Spleen (tissue), 13 donors: ENCODE measurements at regions of chr2 and their contacts with region 1.

Region 1: DNA sequence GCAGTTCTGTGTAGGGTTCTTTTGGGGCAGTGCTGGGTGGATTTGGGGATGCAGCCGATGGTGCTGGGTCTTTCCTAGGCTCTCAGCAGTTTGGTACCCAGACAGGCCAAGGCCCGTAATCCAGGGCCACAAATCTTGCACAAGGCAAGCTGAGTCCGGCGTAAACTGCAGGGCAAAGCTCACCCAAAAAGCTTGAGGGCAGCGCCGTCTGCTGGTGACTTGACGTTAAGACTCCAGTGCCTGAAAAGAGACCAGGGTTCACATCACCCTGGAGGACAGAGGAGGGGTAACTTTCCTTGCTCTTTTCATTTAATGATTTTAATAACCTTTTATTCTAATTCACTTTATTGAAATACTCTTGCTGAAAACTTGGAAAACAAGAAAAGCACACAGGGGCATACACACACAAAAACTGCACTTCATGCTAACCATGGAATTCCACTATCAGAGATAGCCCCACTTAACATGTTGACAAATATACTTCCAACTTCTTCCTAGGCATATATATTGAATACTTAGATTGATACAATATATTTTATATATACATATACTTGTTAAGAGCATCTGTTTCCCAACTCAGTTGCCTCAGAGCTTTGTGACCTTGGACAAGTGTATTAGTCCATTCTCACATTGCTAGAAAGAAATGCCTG is 38.9 kb downstream of the CNGA3 start:
- DNase-seq: peak; percentile 91
- H3K4me3 ChIP-seq: no peak overlapping the region
- H3K27ac ChIP-seq: no peak overlapping the region
- H3K4me1 ChIP-seq: peaks cover 0 to 7% (median 0%) of the 10 kb centered on the region in 6 donors
- H3K27me3 ChIP-seq: peaks cover 0 to 5% (median 0%) of the 10 kb centered on the region in 7 donors
- CTCF ChIP-seq: peak; percentile 78 to 94 (median 90)
- POLR2A ChIP-seq: no peak

Region 2: GRCh38 chr2:97697252-97698235 is 687.6 kb before region 1 on chr2:
- intact Hi-C with region 1: loop called (anchors 5 kb)
- DNase-seq: peak; percentile 98
- H3K4me3 ChIP-seq: no peak overlapping the region
- H3K27ac ChIP-seq: no peak overlapping the region
- H3K4me1 ChIP-seq: peaks cover 0 to 12% (median 3%) of the 10 kb centered on the region in 6 donors
- H3K27me3 ChIP-seq: no peaks in the 10 kb centered on the region
- CTCF ChIP-seq: peak; percentile 91 to 98 (median 95)
- POLR2A ChIP-seq: no peak

Region 3: GRCh38 chr2:97806738-97807618 is 578.2 kb before region 1 on chr2:
- intact Hi-C with region 1: loop called (anchors 2 kb)
- DNase-seq: peak; percentile 95
- H3K4me3 ChIP-seq: no peak overlapping the region
- H3K27ac ChIP-seq: no peak overlapping the region
- H3K4me1 ChIP-seq: peaks cover 0 to 11% (median 8%) of the 10 kb centered on the region in 6 donors
- H3K27me3 ChIP-seq: no peaks in the 10 kb centered on the region
- CTCF ChIP-seq: peak; percentile 64 to 93 (median 89)
- POLR2A ChIP-seq: no peak

Region 4: GRCh38 chr2:98280376-98281102 is 104.6 kb before region 1 on chr2:
- intact Hi-C with region 1: no loop called
- DNase-seq: no peak
- H3K4me3 ChIP-seq: no peak overlapping the region
- H3K27ac ChIP-seq: no peak overlapping the region
- H3K4me1 ChIP-seq: no peaks in the 10 kb centered on the region
- H3K27me3 ChIP-seq: peaks cover 0 to 42% (median 7%) of the 10 kb centered on the region in 7 donors
- CTCF ChIP-seq: no peak
- POLR2A ChIP-seq: no peak